Aorta (tissue), 5 donors: ENCODE measurements at regions of chr17 and their contacts with region 1.

Region 1: DNA sequence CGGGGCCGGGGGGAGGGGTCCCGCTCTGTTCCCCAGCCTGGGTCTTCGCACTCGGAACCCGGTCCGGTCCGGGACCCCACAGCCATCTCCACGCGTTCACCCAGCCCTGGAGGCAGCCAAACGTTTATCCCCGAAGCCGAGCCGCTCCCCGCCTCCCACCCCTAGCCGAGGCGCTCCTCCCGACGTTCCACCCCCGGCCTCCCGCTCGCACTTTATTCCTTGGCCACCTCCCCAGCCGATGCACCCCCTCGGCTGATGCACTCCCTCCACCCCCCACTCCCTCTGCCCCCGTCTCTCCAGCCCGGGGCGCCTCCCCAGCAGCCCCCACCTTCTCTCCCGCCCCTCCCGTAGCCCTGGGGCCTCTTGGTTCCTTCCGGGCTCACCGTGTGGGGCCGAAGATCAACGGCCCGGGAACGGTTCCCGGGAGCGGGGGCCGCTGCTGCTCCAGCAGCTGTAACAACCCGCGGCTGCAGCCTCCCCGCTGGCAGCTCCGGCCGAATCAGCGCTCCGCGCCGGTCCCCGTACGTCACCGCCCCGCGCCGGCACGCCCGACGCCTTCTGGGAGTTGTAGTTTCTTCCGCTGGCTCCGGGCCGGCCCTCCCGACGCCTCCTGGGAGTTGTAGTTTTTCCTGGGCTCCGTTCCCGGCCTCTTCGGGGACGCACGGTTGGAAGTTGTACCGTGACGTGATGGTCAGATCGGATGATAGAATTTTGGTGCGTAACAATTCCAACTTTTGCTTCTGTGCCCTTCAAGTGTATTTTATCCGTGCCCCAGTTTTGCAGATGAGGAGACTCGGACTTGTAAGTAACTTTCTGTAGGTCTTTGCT is at the starts of genes LRRC3C and ORMDL3:
- DNase-seq: peak; percentile 96 to 98
- ATAC-seq: peak; percentile 96
- H3K4me3 ChIP-seq: peak within 1 kb of the TSS; percentile 76 to 97
- H3K27ac ChIP-seq: peak within 1 kb of the TSS; percentile 99 to 100
- H3K4me1 ChIP-seq: peaks cover 3 to 6% of the 10 kb centered on the region in 2 donors
- H3K27me3 ChIP-seq: no peaks in the 10 kb centered on the region
- total RNA-seq, gene LRRC3C: not detected
- total RNA-seq, gene ORMDL3: 44.2 to 45.0 TPM

Region 2: GRCh38 chr17:39952680-39953470 is 25.6 kb after region 1 on chr17:
- intact Hi-C with region 1: loop called (anchors 2 kb)
- DNase-seq: peak; percentile 99 to 100
- ATAC-seq: peak; percentile 95
- H3K4me3 ChIP-seq: no peak overlapping the region
- H3K27ac ChIP-seq: no peak overlapping the region
- H3K4me1 ChIP-seq: no peaks in the 10 kb centered on the region
- H3K27me3 ChIP-seq: no peaks in the 10 kb centered on the region

Region 3: GRCh38 chr17:39963829-39964228 is 36.5 kb after region 1 on chr17:
- intact Hi-C with region 1: loop called in 1 of 2 experiments (anchors 5 kb)
- DNase-seq: no peak
- ATAC-seq: no peak
- H3K4me3 ChIP-seq: no peak overlapping the region
- H3K27ac ChIP-seq: no peak overlapping the region
- H3K4me1 ChIP-seq: no peaks in the 10 kb centered on the region
- H3K27me3 ChIP-seq: no peaks in the 10 kb centered on the region